Activated CD4-positive, alpha-beta memory T cell treated with anti-CD3 and anti-CD28 coated beads for 36 hours (primary cell): ENCODE measurements at regions of chr3 and their contacts with region 1.

Region 1: DNA sequence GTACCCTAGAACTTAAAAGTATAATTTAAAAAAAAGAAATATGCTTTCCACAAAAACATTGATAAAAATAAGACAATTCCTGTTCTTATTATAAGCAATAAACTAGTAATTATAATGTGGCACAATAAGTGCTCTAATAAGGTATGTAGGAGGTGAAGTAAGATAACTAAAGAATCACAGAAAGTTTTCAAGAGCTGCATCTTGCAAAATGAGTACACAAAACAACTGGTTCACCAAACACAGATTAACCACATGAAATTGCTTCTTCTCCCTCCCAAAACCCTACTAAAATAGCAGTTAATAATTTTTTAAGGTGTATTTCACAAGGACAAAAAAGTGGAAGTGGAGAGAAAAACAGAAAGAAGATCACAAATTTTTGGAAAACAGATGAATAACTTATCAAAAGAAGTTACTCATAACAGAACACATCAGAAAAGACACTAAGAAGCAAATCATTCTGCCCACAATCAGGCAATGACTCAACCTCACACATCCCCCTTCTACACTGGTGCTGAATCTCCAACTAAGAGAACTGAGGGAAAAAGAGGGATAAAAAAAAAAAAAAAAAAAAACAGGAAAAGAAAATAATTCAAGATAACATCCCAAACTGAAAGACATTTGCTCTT is 64.2 kb downstream of the TBC1D5 start:
- DNase-seq: peak; percentile 17
- H3K4me3 Mint-ChIP-seq: no peak overlapping the region
- H3K27ac Mint-ChIP-seq: no peak overlapping the region
- H3K4me1 Mint-ChIP-seq: peaks cover 17% of the 10 kb centered on the region
- H3K27me3 Mint-ChIP-seq: no peaks in the 10 kb centered on the region

Region 2: GRCh38 chr3:17432237-17432636 is 246.0 kb before region 1 on chr3:
- CTCF ChIA-PET with region 1: no interaction called
- POLR2A ChIA-PET with region 1: no interaction called
- intact Hi-C with region 1: no loop called
- DNase-seq: no peak
- H3K4me3 Mint-ChIP-seq: no peak overlapping the region
- H3K27ac Mint-ChIP-seq: no peak overlapping the region
- H3K4me1 Mint-ChIP-seq: no peaks in the 10 kb centered on the region
- H3K27me3 Mint-ChIP-seq: no peaks in the 10 kb centered on the region

Region 3: DNA sequence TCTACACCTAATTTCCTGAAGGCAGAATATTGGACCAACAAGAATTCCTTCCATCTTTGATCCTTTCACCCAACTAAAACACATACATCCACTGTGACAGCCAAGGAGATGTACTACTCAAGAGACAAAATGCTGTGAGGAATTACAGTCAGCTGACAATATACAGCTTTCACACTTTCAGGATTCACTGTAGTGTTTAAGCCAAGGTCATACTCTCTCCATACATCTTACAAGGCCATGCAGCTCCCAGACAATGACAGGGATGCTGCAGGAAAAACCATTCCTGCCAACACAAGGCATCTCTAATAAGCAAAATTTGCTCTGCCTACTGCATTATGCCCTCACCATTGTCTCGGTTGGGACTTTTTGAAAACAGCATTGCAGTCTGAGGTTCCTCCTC is 106.5 kb before region 1 on chr3:
- CTCF ChIA-PET with region 1: no interaction called
- POLR2A ChIA-PET with region 1: no interaction called
- intact Hi-C with region 1: no loop called
- DNase-seq: no peak
- H3K4me3 Mint-ChIP-seq: no peak overlapping the region
- H3K27ac Mint-ChIP-seq: no peak overlapping the region
- H3K4me1 Mint-ChIP-seq: peaks cover 7% of the 10 kb centered on the region
- H3K27me3 Mint-ChIP-seq: no peaks in the 10 kb centered on the region

Region 4: DNA sequence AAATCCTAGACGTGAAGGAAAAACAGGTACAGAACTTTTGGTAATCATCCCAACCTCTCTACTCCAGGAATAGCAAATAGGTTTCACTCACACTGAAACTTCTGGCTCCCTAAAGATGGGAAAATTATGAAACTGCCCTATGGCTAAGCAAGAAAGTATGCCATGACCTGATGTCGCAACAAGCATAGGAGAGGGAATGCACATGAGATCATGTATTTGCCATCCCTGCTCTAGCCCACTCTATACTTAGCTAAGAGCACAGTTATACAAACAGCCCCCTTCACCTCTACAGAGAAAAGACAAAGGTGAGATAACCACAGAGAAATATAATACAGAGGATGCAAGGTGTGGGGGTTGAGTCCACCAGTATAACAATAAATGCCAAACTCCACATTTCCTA is 38.5 kb before region 1 on chr3:
- CTCF ChIA-PET with region 1: no interaction called
- POLR2A ChIA-PET with region 1: no interaction called
- intact Hi-C with region 1: loop called (anchors 5 kb)
- DNase-seq: no peak
- H3K4me3 Mint-ChIP-seq: no peak overlapping the region
- H3K27ac Mint-ChIP-seq: no peak overlapping the region
- H3K4me1 Mint-ChIP-seq: peaks cover 25% of the 10 kb centered on the region
- H3K27me3 Mint-ChIP-seq: no peaks in the 10 kb centered on the region

Region 5: DNA sequence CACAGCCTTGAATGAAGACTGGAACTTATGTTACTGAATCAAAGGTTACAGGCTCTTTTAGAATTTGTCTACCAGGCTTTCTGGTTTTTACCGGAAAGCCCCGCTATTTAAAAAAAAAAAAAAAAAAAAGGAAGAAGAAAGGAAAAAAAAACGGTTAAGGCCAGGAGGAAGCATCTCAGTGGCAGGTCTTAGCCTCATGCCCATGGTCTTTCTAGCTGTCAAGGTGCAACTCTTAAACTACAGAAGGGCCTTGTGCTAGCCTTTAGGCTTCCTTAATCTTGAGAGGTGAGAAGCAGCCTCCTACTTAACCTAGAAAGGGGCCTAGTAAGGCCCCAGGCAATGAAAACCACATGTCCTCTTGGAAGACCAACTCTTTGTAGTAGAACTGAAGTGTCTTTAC is 13.3 kb before region 1 on chr3:
- CTCF ChIA-PET with region 1: no interaction called
- POLR2A ChIA-PET with region 1: no interaction called
- intact Hi-C with region 1: no loop called
- DNase-seq: no peak
- H3K4me3 Mint-ChIP-seq: no peak overlapping the region
- H3K27ac Mint-ChIP-seq: no peak overlapping the region
- H3K4me1 Mint-ChIP-seq: peaks cover 5% of the 10 kb centered on the region
- H3K27me3 Mint-ChIP-seq: no peaks in the 10 kb centered on the region

Region 6: DNA sequence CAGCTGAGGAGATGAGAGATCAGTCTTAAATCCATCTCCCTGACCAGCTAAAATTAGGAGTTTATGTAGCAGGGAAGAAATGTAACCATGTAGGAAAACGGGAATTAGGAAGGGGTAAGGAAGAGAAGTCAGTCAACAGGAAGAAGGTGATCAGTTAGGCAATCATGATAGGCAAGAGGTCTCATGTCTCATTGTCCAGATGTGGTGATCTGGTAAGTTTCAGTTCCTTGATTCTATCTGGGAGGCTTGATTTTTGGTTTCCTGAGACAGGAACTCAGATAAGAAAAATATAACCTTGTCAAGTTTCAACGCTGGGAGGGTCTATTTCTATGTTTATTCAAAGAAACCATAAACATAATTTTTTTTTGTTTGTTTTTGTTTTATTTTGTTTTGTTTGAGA is 104.5 kb after region 1 on chr3:
- CTCF ChIA-PET with region 1: no interaction called
- POLR2A ChIA-PET with region 1: no interaction called
- intact Hi-C with region 1: no loop called
- DNase-seq: no peak
- H3K4me3 Mint-ChIP-seq: no peak overlapping the region
- H3K27ac Mint-ChIP-seq: no peak overlapping the region
- H3K4me1 Mint-ChIP-seq: peaks cover 7% of the 10 kb centered on the region
- H3K27me3 Mint-ChIP-seq: peaks cover 2% of the 10 kb centered on the region